ENCODE measurements at regions of chr2 and their contacts with region 1.

Region 1: GRCh38 chr2:101205521-101205998 is 47.1 kb upstream of the CNOT11 start:
- DNase-seq: no peak
- H3K4me3 ChIP-seq: peak overlapping the region in 3 of 4 donors; percentile 13 to 51 (median 22)
- H3K27ac ChIP-seq: peak overlapping the region in 2 of 4 donors; percentile 26 to 30
- H3K4me1 ChIP-seq: peaks cover 0 to 17% (median 15%) of the 10 kb centered on the region in 3 donors
- H3K27me3 ChIP-seq: no peaks in the 10 kb centered on the region
- CTCF ChIP-seq: peak; percentile 26 to 74 (median 56)
- POLR2A ChIP-seq: no peak

Region 2: DNA sequence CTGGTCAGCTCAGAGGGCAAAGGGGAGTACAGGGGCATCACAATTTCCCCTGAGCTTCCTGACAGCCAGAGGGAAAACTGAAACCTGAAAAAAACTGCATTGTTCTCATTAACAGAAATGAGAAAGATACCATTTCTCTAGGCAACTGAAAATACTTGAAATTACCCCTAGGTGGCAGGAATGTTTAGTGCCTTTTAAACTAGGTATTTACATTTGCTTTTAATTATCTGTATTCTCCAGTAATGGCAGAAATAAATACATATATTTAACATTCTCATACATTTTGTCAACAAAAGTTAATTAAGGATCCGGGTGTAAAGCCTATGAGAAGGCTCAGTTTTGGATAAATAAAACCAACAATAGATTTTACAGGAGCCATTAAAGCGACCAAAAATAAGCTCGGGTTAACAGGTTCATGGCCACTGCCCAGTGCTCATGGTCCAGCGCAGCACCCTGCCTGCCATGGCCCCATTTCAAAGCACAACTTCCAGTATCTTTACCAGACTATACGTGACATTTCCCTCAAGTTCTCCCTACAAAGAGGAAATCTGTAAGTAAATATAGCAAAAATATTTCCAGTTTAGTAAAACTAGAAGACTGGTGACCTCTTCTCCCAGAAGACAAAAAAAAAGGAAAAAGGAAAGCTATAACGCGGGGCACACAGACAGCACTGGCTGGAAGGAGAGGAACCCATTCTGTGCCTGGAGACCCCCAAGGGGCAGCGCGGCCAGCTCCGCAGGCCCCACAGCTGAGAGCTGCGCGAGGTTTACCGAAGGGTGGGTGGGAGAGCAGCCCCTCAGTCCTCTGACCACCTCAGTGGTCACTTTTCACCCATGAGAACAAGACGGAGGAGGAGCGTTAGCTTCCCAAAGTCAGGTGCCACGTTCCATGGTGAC is 168.8 kb before region 1 on chr2:
- intact Hi-C with region 1: loop called (anchors 10 kb)
- DNase-seq: no peak
- H3K4me3 ChIP-seq: no peak overlapping the region
- H3K27ac ChIP-seq: no peak overlapping the region
- H3K4me1 ChIP-seq: no peaks in the 10 kb centered on the region
- H3K27me3 ChIP-seq: no peaks in the 10 kb centered on the region
- CTCF ChIP-seq: peak; percentile 21 to 72 (median 54)
- POLR2A ChIP-seq: no peak

Region 3: GRCh38 chr2:101328474-101329007 is 123.0 kb after region 1 on chr2:
- intact Hi-C with region 1: no loop called
- DNase-seq: no peak
- H3K4me3 ChIP-seq: peak overlapping the region in 2 of 4 donors; percentile 18 to 31
- H3K27ac ChIP-seq: peak overlapping the region; percentile 75 to 94 (median 87)
- H3K4me1 ChIP-seq: peaks cover 26 to 64% (median 32%) of the 10 kb centered on the region in 3 donors
- H3K27me3 ChIP-seq: no peaks in the 10 kb centered on the region
- CTCF ChIP-seq: no peak
- POLR2A ChIP-seq: no peak

Region 4: GRCh38 chr2:101361121-101361870 is 155.7 kb after region 1 on chr2:
- intact Hi-C with region 1: no loop called
- DNase-seq: no peak
- H3K4me3 ChIP-seq: no peak overlapping the region
- H3K27ac ChIP-seq: peak overlapping the region in 1 of 4 donors; percentile 39
- H3K4me1 ChIP-seq: peaks cover 0 to 25% (median 9%) of the 10 kb centered on the region in 3 donors
- H3K27me3 ChIP-seq: no peaks in the 10 kb centered on the region
- CTCF ChIP-seq: no peak
- POLR2A ChIP-seq: no peak

Measured in esophagus squamous epithelium (tissue), 5 donors.